Breast epithelium (tissue), 4 donors: ENCODE measurements at regions of chr3 and their contacts with region 1.

Region 1: DNA sequence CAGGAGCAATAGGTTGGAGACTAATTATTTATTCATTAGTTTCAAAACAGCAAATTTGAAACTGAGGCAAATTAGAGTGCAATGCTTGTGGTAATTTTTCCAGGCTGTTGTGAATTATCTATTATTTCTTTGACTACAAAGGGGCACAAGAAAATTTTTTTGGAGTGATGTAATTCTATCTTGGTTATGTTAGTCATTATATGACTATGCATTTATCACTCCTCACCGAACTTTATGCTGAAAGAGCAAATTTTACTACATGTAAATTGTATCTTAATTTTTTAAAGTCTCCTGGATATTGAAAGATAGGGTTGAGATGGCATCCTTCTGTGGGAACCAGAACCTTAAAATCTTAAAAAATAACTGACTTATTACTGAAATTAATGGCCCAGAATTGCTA is 320.0 kb upstream of the ROBO1 start:
- DNase-seq: no peak
- H3K4me3 ChIP-seq: no peak overlapping the region
- H3K27ac ChIP-seq: no peak overlapping the region
- H3K4me1 ChIP-seq: no peaks in the 10 kb centered on the region
- H3K27me3 ChIP-seq: no peaks in the 10 kb centered on the region
- CTCF ChIP-seq: no peak
- POLR2A ChIP-seq: no peak

Region 2: GRCh38 chr3:78978037-78978436 is 1109.7 kb before region 1 on chr3:
- intact Hi-C with region 1: no loop called
- DNase-seq: no peak
- H3K4me3 ChIP-seq: no peak overlapping the region
- H3K27ac ChIP-seq: no peak overlapping the region
- H3K4me1 ChIP-seq: no peaks in the 10 kb centered on the region
- H3K27me3 ChIP-seq: no peaks in the 10 kb centered on the region
- CTCF ChIP-seq: no peak
- POLR2A ChIP-seq: no peak

Region 3: GRCh38 chr3:80035021-80035420 is 52.7 kb before region 1 on chr3:
- intact Hi-C with region 1: loop called (anchors 2 kb)
- DNase-seq: no peak
- H3K4me3 ChIP-seq: no peak overlapping the region
- H3K27ac ChIP-seq: no peak overlapping the region
- H3K4me1 ChIP-seq: no peaks in the 10 kb centered on the region
- H3K27me3 ChIP-seq: no peaks in the 10 kb centered on the region
- CTCF ChIP-seq: no peak
- POLR2A ChIP-seq: no peak